ENCODE measurements at regions of chr14 and their contacts with region 1.

Region 1: GRCh38 chr14:55707365-55707804 is 127.4 kb downstream of the KTN1 start:
- DNase-seq: peak; percentile 76
- ATAC-seq: peak; percentile 81
- H3K4me3 ChIP-seq: no peak overlapping the region
- H3K27ac ChIP-seq: no peak overlapping the region
- H3K4me1 ChIP-seq: peaks cover 4% of the 10 kb centered on the region
- H3K27me3 ChIP-seq: no peaks in the 10 kb centered on the region
- CTCF ChIP-seq: peak; percentile 82
- POLR2A ChIP-seq: no peak
- RAD21 ChIP-seq: peak; percentile 91

Region 2: DNA sequence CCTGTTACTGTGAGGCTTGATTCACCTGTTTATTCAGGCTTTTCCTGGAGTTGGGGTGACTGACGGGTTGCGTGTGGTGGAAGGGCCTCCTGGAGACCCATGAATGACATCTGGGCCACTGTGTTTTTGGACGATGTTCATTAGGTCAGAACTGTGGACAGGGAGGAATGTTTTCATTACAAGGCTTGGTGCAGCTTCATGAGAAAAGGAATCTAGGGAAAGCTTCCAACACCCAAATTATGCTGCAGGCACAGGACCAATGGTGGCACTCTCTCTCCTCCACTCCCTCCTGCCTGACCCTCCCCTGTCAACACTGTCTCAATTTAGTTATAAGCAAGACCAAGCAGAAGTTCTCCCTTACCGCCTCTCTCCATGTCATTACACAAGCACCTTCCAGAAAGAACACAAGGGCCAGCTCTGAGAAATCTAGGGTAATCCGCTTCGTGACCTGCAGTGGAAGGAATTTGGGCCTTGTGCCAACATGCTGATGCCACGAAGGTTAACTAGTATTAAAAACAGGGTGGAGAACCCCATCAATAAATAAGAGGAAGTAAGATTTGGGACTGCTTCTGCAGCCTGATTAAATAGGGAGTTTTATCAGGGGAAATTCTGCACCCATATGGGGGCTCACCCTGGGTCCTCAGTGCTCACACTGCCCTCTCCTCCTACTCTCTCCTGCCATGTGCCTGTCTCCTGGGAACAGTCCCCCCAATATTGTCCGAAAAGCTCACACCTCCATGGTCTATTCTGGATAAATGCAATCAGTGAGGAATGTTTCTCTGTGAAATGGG is 73.0 kb after region 1 on chr14:
- CTCF ChIA-PET with region 1: no interaction called
- POLR2A ChIA-PET with region 1: no interaction called
- dilution Hi-C with region 1: no loop called
- in situ Hi-C with region 1: no loop called
- intact Hi-C with region 1: no loop called
- DNase-seq: peak; percentile 33
- ATAC-seq: peak; percentile 76
- H3K4me3 ChIP-seq: no peak overlapping the region
- H3K27ac ChIP-seq: no peak overlapping the region
- H3K4me1 ChIP-seq: peaks cover 6% of the 10 kb centered on the region; the same call in 1 of the 2 replicates
- H3K27me3 ChIP-seq: peaks cover 2% of the 10 kb centered on the region
- CTCF ChIP-seq: no peak
- POLR2A ChIP-seq: no peak
- RAD21 ChIP-seq: no peak

Region 3: DNA sequence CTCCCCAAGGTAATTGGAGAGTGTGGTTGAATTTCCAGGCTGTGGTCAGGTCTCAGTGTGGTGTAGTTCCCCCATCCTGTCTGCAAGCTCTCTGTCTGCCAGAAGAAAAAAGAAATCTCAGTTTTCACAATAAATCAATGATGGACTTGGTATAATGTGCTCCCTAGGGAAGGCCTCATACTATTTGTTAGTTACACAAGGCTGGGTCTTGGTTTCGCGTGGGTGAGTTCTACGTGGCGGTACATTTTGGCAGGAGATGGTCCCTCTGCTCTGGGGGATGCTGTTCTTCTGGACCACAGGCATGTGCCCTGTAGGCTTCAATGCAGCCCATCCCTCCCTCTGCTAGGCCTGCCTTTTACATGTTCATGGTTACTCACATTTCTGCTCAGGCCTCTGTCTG is 204.4 kb after region 1 on chr14:
- CTCF ChIA-PET with region 1: no interaction called
- POLR2A ChIA-PET with region 1: no interaction called
- dilution Hi-C with region 1: no loop called
- in situ Hi-C with region 1: no loop called
- intact Hi-C with region 1: no loop called
- DNase-seq: no peak
- ATAC-seq: no peak
- H3K4me3 ChIP-seq: no peak overlapping the region
- H3K27ac ChIP-seq: no peak overlapping the region
- H3K4me1 ChIP-seq: no peaks in the 10 kb centered on the region
- H3K27me3 ChIP-seq: peaks cover 27% of the 10 kb centered on the region
- CTCF ChIP-seq: no peak
- POLR2A ChIP-seq: no peak
- RAD21 ChIP-seq: no peak

Region 4: GRCh38 chr14:56271970-56272369 is 564.6 kb after region 1 on chr14:
- CTCF ChIA-PET with region 1: no interaction called
- POLR2A ChIA-PET with region 1: no interaction called
- dilution Hi-C with region 1: no loop called
- in situ Hi-C with region 1: no loop called
- intact Hi-C with region 1: loop called (anchors 10 kb)
- DNase-seq: peak; percentile 71
- ATAC-seq: no peak
- H3K4me3 ChIP-seq: no peak overlapping the region
- H3K27ac ChIP-seq: no peak overlapping the region
- H3K4me1 ChIP-seq: peaks cover 19% of the 10 kb centered on the region
- H3K27me3 ChIP-seq: no peaks in the 10 kb centered on the region
- CTCF ChIP-seq: no peak
- POLR2A ChIP-seq: no peak
- RAD21 ChIP-seq: no peak